ENCODE measurements at regions of chr3 and their contacts with region 1.

Region 1: GRCh38 chr3:112303764-112304325 is 9.8 kb upstream of the SLC9C1 start:
- DNase-seq: peak; percentile 50
- H3K4me3 ChIP-seq: peak overlapping the region; percentile 51
- H3K27ac ChIP-seq: peak overlapping the region; percentile 2
- H3K4me1 ChIP-seq: peaks cover 24% of the 10 kb centered on the region
- CTCF ChIP-seq: no peak

Region 2: GRCh38 chr3:111967651-111968274 is 336.1 kb before region 1 on chr3:
- CTCF ChIA-PET with region 1: no interaction called
- POLR2A ChIA-PET with region 1: no interaction called
- intact Hi-C with region 1: no loop called
- DNase-seq: peak; percentile 82
- H3K4me3 ChIP-seq: no peak overlapping the region
- H3K27ac ChIP-seq: no peak overlapping the region
- H3K4me1 ChIP-seq: peaks cover 6% of the 10 kb centered on the region
- CTCF ChIP-seq: peak; percentile 93

Region 3: DNA sequence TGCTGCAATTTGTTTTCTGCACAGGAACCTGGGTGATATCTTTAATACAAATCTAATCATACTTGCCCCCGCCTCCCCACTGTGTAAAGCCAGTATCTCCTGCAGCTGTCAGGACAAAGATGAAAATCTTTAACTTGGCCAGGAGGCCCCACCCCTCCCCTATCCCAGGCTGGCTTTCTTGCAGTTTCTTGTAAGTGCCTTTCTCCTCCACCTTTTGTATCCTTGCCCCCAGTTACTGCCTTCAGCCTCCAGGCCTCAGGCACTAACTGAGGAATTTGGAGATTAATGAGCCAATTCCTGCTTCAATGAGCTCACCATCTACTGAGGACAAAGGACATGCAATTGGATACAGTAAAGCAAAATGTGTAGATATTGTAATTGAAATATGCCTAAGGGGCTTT is 177.3 kb before region 1 on chr3:
- CTCF ChIA-PET with region 1: no interaction called
- POLR2A ChIA-PET with region 1: no interaction called
- intact Hi-C with region 1: no loop called
- DNase-seq: peak; percentile 82
- H3K4me3 ChIP-seq: peak overlapping the region; percentile 57
- H3K27ac ChIP-seq: peak overlapping the region; percentile 99
- H3K4me1 ChIP-seq: peaks cover 96% of the 10 kb centered on the region
- CTCF ChIP-seq: no peak

Region 4: GRCh38 chr3:112314649-112315048 is 10.8 kb after region 1 on chr3:
- CTCF ChIA-PET with region 1: interaction called, 3 read pairs
- POLR2A ChIA-PET with region 1: interaction called, 12 read pairs
- intact Hi-C with region 1: no loop called
- DNase-seq: no peak
- H3K4me3 ChIP-seq: no peak overlapping the region
- H3K27ac ChIP-seq: no peak overlapping the region
- H3K4me1 ChIP-seq: no peaks in the 10 kb centered on the region
- CTCF ChIP-seq: no peak

Region 5: GRCh38 chr3:112321867-112322649 is 18.2 kb after region 1 on chr3:
- CTCF ChIA-PET with region 1: interaction called, 4 read pairs
- POLR2A ChIA-PET with region 1: interaction called, 15 read pairs
- intact Hi-C with region 1: no loop called
- DNase-seq: no peak
- H3K4me3 ChIP-seq: no peak overlapping the region
- H3K27ac ChIP-seq: no peak overlapping the region
- H3K4me1 ChIP-seq: peaks cover 5% of the 10 kb centered on the region
- CTCF ChIP-seq: no peak

Measured in OCI-LY7 (cell line).